ENCODE measurements at regions of chr17 and their contacts with region 1.

Region 1: GRCh38 chr17:76681222-76682137 is 29.3 kb downstream of the MXRA7 start:
- DNase-seq: no peak
- H3K4me3 ChIP-seq: no peak overlapping the region
- H3K27me3 ChIP-seq: no peaks in the 10 kb centered on the region
- CTCF ChIP-seq: peak; percentile 87

Region 2: GRCh38 chr17:76557368-76558197 is 123.9 kb before region 1 on chr17:
- CTCF ChIA-PET with region 1: interaction called, 21 read pairs
- POLR2A ChIA-PET with region 1: interaction called, 6 read pairs
- DNase-seq: peak; percentile 70
- H3K4me3 ChIP-seq: peak overlapping the region; percentile 92
- H3K27me3 ChIP-seq: no peaks in the 10 kb centered on the region
- CTCF ChIP-seq: peak; percentile 74

Region 3: GRCh38 chr17:76611749-76612512 is 69.5 kb before region 1 on chr17:
- CTCF ChIA-PET with region 1: no interaction called
- POLR2A ChIA-PET with region 1: no interaction called
- DNase-seq: no peak
- H3K4me3 ChIP-seq: no peak overlapping the region
- H3K27me3 ChIP-seq: no peaks in the 10 kb centered on the region
- CTCF ChIP-seq: no peak

Region 4: DNA sequence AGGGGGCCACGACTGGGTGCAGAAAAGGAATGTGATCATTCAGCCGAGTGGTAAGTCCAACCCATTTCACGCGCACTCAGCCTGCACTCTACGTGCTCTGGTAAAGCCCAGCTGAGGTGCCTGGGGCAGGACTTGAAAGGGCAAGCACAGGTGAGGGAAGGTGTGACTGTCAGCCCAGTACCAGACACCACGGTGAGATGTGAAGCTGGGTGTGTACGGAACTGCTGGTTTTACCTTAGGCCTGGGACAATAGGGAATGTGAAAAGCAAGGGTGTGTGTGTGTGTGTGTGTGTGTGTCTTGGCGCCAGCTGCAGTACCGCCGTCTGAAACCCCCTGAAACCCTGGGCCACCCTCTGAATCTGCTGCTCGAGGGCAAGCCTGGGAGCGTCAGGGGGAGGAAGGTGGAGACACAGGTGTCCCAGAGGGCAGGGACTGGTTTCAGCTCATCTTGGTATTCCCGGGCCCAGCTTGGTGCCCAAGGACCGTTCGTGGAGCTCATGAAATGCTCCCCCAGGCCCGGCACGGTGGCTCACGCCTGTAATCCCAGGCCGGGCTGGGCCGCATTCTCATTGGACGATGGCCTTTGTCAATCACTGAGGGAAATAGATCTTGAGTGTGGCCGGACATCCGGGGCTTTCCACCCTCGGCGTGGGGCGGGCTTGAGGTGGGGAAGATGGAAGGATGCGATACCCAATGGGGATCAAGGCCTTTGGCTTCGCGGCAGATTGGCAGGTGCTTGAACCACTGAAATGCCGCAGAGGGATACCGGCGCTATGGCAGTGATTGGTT is 10.2 kb before region 1 on chr17:
- CTCF ChIA-PET with region 1: interaction called, 18 read pairs
- POLR2A ChIA-PET with region 1: no interaction called
- DNase-seq: peak; percentile 98
- H3K4me3 ChIP-seq: peak overlapping the region; percentile 57
- H3K27me3 ChIP-seq: no peaks in the 10 kb centered on the region
- CTCF ChIP-seq: no peak

Region 5: GRCh38 chr17:76709077-76709950 is 27.8 kb after region 1 on chr17:
- CTCF ChIA-PET with region 1: interaction called, 20 read pairs
- POLR2A ChIA-PET with region 1: no interaction called
- DNase-seq: peak; percentile 93
- H3K4me3 ChIP-seq: peak overlapping the region; percentile 84
- H3K27me3 ChIP-seq: no peaks in the 10 kb centered on the region
- CTCF ChIP-seq: no peak

Measured in BJ (cell line).